ENCODE measurements at regions of chr19 and their contacts with region 1.

Region 1: GRCh38 chr19:16071072-16071691 is 5.1 kb upstream of the TPM4 start:
- DNase-seq: no peak
- H3K4me3 Mint-ChIP-seq: no peak overlapping the region
- H3K27ac Mint-ChIP-seq: no peak overlapping the region
- H3K4me1 Mint-ChIP-seq: peaks cover 6% of the 10 kb centered on the region
- H3K27me3 Mint-ChIP-seq: no peaks in the 10 kb centered on the region
- CTCF ChIP-seq: no peak

Region 2: GRCh38 chr19:16088351-16089009 is 17.3 kb after region 1 on chr19:
- CTCF ChIA-PET with region 1: interaction called, 11 read pairs
- intact Hi-C with region 1: no loop called
- DNase-seq: peak; percentile 78
- H3K4me3 Mint-ChIP-seq: peak overlapping the region; percentile 55
- H3K27ac Mint-ChIP-seq: peak overlapping the region; percentile 95
- H3K4me1 Mint-ChIP-seq: peaks cover 34% of the 10 kb centered on the region
- H3K27me3 Mint-ChIP-seq: no peaks in the 10 kb centered on the region
- CTCF ChIP-seq: no peak